ENCODE measurements at regions of chr11 and their contacts with region 1.

Region 1: DNA sequence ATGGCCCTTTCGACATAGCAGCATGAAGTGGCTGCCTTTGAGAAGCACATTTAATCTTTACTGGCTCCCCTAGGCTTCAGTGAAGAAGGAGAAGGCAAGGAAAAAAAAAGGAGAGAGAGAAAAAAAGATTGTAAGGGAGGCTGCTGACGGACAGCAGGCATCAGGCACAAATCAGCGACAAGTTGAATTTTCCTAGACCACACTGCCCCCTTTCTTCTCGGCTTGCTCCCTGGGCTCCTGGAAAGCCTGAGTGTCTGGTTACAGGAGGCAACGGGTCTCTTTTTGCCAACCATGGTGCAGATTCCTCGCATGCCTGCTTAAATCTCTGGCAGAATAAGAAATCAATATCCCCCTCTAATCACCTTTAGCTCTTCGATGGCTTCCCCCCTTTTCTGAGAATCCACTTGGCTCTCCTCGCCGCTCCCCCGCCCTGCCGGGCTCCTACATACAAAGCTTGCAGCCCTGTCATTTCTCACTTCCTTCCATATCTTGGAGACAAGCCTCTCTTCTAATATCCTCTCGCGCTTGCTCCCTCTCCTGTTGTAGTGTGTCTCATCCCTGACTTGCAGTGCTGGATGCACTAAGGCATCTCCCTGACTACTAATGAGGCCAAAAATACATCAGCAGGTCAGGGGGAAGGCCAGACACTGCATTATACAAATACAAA is 14.3 kb downstream of the BLID start:
- DNase-seq: no peak

Region 2: GRCh38 chr11:121741761-121742361 is 359.9 kb before region 1 on chr11:
- intact Hi-C with region 1: loop called (anchors 5 kb)
- DNase-seq: peak; percentile 85

Region 3: DNA sequence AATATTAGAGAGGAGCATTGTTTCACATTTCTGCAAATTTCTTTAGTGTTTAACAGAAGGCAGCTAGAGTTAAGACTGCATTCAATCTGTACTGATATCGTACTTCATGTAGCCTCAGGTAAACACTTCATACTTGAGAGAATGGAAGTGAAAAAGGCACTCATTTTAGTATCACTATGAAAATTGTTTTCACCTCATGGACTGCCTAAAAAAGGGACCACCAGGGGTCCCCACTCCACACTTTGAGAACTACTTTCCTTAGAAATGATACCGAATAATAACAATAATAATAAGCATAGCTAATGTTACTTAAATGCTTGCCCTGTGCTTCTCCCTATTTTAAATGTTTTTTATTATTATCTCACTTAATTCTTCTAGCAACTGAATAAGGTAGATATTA is 80.9 kb before region 1 on chr11:
- intact Hi-C with region 1: loop called (anchors 5 kb)
- DNase-seq: no peak

Region 4: GRCh38 chr11:122159173-122159721 is 57.5 kb after region 1 on chr11:
- intact Hi-C with region 1: loop called (anchors 5 kb)
- DNase-seq: no peak

Region 5: GRCh38 chr11:122202951-122203456 is 101.2 kb after region 1 on chr11:
- intact Hi-C with region 1: loop called (anchors 2 kb)
- DNase-seq: no peak

Measured in cardiac septum (tissue), 1 donor.